Sigmoid colon (tissue), 7 donors: ENCODE measurements at regions of chr16 and their contacts with region 1.

Region 1: GRCh38 chr16:70345840-70346239 is 863 bp upstream of the DDX19A start:
- DNase-seq: no peak
- H3K4me3 ChIP-seq: peak overlapping the region; percentile 53 to 79 (median 68)
- H3K27ac ChIP-seq: peak overlapping the region; percentile 86 to 96 (median 90)
- H3K4me1 ChIP-seq: peaks cover 0 to 28% (median 20%) of the 10 kb centered on the region in 4 donors
- H3K27me3 ChIP-seq: no peaks in the 10 kb centered on the region
- CTCF ChIP-seq: no peak
- EP300 ChIP-seq: no peak
- POLR2A ChIP-seq: no peak

Region 2: DNA sequence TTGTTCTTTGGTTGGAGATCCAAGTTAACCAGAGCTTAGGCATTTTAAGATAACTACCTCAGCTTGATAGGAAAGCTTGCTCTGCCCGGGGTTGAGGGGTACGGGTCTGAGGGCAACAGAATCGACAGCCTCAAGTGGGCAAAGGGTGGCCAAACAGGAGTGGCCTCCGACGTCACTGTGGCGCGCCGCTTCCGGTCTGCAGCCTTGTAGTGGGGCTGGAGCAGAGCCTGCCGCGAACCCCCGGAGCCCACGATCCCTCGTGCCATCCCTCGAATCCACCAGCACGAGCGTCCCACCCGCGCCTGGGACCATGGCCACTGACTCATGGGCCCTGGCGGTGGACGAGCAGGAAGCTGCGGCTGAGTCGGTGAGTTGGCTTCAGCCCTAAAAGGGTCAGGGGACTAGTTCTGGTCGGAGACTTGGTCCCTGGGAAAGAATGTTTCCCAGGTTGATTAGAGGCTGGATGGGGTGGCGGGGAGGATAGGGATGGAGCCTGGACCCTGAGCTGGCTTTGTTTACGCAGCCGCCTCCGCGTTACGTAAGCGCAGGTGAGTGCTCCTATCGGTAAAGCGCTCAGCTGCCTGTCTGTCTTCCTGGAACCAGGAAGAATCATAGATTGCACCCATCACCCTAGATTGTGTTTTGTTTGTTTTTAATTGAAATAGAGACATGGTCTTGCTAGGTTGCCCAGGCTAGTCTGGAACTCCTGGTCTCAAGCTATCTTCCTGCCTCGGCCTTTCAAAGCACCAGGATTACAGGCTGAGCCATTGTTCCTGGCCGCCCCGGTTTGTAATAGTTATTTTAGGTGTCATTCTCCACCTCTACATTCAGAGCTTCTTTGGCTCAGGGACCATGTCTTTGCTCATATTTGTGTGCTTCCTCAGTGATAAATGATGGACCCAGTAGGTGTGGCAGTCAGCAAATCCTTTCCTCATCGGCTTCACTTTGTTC is 46.6 kb before region 1 on chr16 and contains the start of gene DDX19B:
- intact Hi-C with region 1: loop called (anchors 2 kb)
- DNase-seq: peak; percentile 90
- H3K4me3 ChIP-seq: peak within 1 kb of the TSS; percentile 68 to 83 (median 80)
- H3K27ac ChIP-seq: peak within 1 kb of the TSS; percentile 92 to 95 (median 94)
- H3K4me1 ChIP-seq: peaks cover 0 to 19% (median 11%) of the 10 kb centered on the region in 4 donors
- H3K27me3 ChIP-seq: no peaks in the 10 kb centered on the region
- CTCF ChIP-seq: peak in 1 of 4 experiments; percentile 6
- EP300 ChIP-seq: no peak
- POLR2A ChIP-seq: peak; percentile 38 to 47
- total RNA-seq, gene DDX19B: 16.6 to 27.1 (median 24.6) TPM

Region 3: DNA sequence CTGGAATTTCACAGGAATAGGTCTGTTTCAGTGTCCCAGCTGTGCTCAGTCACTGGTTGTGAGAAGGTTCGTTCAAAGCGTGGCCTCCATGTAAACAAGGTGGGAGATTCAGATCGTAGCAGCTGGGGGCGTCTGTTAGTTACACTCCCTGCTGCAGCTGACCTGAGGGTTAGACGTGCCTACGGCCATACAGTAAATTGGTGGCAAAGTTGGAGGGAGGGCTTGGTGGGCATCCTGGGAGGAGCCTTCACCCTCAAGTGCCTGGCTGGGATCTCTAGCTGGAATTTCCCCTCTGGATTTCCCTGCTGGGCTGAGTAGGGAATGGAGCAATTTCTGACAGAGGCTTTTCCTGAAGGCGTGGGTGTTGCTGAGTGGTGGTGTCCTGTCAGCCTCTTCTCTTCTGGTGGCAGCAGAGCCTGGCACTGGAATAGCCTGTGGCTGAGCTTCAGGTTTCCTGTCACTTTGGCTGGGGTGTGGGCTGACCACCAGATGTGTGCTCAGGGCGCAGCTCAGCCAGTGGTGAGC is 115.0 kb after region 1 on chr16:
- intact Hi-C with region 1: no loop called
- DNase-seq: no peak
- H3K4me3 ChIP-seq: no peak overlapping the region
- H3K27ac ChIP-seq: no peak overlapping the region
- H3K4me1 ChIP-seq: peaks cover 0 to 4% (median 2%) of the 10 kb centered on the region in 4 donors
- H3K27me3 ChIP-seq: no peaks in the 10 kb centered on the region
- CTCF ChIP-seq: no peak
- EP300 ChIP-seq: no peak
- POLR2A ChIP-seq: no peak

Region 4: DNA sequence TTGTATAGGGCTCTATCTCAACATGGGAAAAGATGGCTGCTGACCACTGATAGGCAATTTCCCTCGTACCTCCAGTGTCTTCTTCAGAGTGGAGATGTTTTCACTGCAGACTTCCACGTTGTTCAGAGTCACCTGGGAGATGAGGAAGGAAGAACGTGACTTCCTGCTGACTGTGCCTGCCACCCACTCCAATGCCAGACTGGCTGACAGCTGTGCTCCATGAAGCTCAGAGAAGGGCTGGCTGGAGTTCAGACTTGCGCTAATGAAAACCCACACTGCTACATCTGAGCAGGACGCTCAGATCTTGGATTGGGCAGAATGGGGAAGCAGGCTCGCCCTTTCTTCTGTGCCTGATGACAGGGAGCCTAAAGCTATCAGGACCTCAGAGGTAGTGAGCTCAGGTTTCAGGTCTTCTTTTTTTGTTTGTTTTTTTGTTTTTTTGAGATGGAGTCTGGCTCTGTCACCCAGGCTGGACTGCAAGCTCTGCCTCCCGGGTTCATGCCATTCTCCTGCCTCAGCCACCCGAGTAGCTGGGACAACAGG is 144.5 kb after region 1 on chr16:
- intact Hi-C with region 1: no loop called
- DNase-seq: no peak
- H3K4me3 ChIP-seq: no peak overlapping the region
- H3K27ac ChIP-seq: no peak overlapping the region
- H3K4me1 ChIP-seq: no peaks in the 10 kb centered on the region
- H3K27me3 ChIP-seq: no peaks in the 10 kb centered on the region
- CTCF ChIP-seq: no peak
- EP300 ChIP-seq: no peak
- POLR2A ChIP-seq: no peak